SK-N-SH (cell line): ENCODE measurements at regions of chr2 and their contacts with region 1.

Region 1: DNA sequence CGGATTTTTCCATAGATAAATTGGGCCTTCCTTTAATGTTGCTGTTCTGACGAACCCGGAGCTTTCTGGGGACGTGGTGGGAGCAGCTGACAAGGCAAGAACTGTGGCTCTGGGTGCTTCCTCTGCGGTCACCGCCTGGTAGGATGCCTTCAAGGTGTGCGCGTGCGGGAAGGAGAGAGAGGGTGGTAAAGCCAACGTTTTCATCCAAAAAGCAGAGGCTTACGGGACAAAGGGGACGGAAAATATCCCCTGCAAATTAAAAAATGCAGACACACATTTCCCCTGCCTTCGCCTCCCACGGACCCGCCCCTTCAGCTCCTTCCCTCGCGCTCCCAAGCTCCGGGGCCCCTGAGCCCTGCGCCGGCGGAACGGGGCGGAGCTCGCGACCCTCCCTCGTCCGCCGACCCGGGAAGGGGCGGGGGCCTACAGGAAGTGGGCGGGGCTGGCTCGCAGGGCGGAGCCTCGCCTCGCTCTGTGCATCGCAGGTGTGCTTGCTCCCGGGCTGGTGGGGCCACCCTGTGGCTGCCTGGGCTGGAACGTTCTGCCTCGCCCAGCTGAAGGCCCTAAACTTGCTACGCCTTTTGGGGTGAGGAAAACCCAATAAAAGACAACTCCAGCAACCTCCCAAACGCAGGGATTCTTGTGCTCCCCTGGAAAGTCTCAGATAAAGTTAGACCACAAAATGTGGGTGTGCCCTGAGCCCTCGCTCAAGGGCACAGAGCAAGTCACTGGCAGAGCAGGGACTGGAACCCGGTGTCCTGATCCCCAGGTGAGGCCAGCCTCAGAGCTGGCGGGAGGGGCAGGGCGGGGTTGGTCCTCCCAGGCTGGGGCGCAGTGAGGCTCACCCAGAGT is 25.4 kb upstream of the SLC66A3 start:
- DNase-seq: peak; percentile 96
- H3K4me3 ChIP-seq: peak overlapping the region in 1 of 2 experiments; percentile 29; a peak in 2 of 4 replicates
- H3K27ac ChIP-seq: peak overlapping the region in 1 of 2 experiments; percentile 3; a peak in 1 of 4 replicates
- H3K4me1 ChIP-seq: peaks cover 0 to 20% of the 10 kb centered on the region in 2 experiments; a peak in 1 of 4 replicates
- H3K27me3 ChIP-seq: no peaks in the 10 kb centered on the region
- CTCF ChIP-seq: no peak
- EP300 ChIP-seq: no peak
- RAD21 ChIP-seq: peak; percentile 68

Region 2: DNA sequence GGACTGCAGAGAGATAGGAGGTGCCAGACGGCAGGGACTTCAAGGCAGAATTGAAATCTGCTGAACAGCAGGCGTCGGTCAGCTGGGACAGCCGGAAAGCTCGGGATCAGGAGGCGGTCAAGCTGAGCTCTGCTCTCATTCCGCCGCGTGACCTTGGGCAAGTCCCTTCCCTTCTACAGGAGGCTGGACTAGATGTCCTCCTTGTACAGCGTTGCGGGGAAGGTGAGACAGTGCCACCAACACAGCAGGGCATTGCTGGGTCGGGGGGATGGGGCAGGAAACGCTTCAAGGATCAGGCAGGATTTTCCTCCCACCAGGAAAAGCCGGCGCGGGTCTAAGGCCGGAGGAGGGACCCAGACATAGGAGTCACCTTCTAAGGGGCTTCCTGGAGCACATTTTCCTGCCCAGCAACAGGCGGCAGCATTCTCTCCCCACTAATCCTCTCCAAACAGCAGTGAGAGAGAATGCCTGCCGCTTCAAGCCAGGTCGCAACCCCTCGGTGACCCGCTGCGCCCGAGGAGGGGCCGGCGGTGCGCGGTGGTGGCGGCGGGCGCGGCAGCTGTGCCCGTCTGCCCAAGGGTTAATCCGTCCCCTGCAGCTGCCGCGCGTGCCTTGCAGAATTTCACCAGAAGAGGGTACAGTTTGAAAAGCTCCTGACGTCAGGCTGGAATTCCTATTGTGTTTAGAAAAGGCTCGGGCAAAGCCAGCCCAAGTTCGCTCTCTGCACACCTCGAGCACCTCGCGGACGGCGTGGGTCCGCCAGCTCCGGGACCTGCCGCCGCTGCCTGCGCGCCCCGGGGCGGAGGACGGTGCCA is 218.4 kb before region 1 on chr2 and contains the start of gene KCNF1:
- CTCF ChIA-PET with region 1: interaction called, 94 read pairs
- POLR2A ChIA-PET with region 1: no interaction called
- DNase-seq: peak; percentile 90
- H3K4me3 ChIP-seq: peak within 1 kb of the TSS; percentile 51 to 63
- H3K27ac ChIP-seq: no peak within 1 kb of the TSS
- H3K4me1 ChIP-seq: peaks cover 0 to 12% of the 10 kb centered on the region in 2 experiments; a peak in 1 of 4 replicates
- H3K27me3 ChIP-seq: peaks cover 14% of the 10 kb centered on the region; the same call in 1 of the 2 replicates
- CTCF ChIP-seq: peak; percentile 56
- EP300 ChIP-seq: no peak
- RAD21 ChIP-seq: peak; percentile 41
- polyA plus RNA-seq, gene KCNF1: 0.16 and 0.23 TPM in 2 replicates

Region 3: GRCh38 chr2:10948606-10949230 is 181.1 kb before region 1 on chr2:
- CTCF ChIA-PET with region 1: no interaction called
- POLR2A ChIA-PET with region 1: no interaction called
- DNase-seq: no peak
- H3K4me3 ChIP-seq: no peak overlapping the region
- H3K27ac ChIP-seq: no peak overlapping the region
- H3K4me1 ChIP-seq: peaks cover 4 to 16% of the 10 kb centered on the region in 2 experiments; a peak in 3 of 4 replicates
- H3K27me3 ChIP-seq: no peaks in the 10 kb centered on the region; the same call in 1 of the 2 replicates
- CTCF ChIP-seq: no peak
- EP300 ChIP-seq: no peak
- RAD21 ChIP-seq: no peak

Region 4: DNA sequence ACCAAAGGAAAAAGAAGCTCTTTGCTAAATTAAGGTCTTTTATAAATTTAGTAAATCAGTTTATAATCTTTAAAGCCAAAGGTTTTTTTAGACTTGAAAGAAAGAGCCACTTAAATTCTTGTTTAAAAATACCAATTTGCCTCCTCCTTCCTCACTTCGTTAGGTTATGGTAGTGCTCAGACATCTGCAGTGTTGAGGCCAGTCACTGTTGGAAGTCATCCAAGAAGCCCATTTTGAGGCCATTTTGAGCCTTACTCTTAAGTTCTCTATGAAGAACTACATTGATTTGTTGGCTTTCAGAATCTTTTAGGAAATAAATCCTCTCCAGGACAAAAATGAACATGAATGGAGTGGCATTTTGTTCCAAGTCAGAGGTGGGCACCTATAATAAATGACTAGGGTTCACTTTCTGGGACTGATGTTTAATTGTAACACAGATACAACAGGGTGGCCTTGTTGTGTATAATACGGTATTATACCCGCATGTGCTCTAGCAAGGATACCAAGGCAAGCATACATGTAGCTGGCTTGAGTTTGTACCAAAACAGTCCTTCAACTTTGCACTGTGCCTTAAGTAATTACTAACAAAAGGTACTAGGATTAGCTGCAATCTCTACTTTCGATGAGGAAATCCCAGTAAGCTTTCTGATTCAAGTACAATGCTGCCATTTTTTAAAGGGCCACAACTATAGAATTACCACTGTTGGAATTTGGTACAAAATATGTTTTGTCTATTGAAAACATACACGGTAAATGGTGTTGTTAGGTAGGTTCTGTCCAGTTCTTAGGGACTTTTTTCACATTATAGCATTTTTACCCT is 48.3 kb after region 1 on chr2:
- CTCF ChIA-PET with region 1: interaction called, 12 read pairs
- POLR2A ChIA-PET with region 1: no interaction called
- DNase-seq: peak; percentile 50
- H3K4me3 ChIP-seq: no peak overlapping the region
- H3K27ac ChIP-seq: peak overlapping the region; percentile 36 to 58; a peak in 3 of 4 replicates
- H3K4me1 ChIP-seq: peaks cover 5 to 12% of the 10 kb centered on the region in 2 experiments; a peak in 2 of 4 replicates
- H3K27me3 ChIP-seq: no peaks in the 10 kb centered on the region
- CTCF ChIP-seq: no peak
- EP300 ChIP-seq: no peak
- RAD21 ChIP-seq: no peak

Region 5: DNA sequence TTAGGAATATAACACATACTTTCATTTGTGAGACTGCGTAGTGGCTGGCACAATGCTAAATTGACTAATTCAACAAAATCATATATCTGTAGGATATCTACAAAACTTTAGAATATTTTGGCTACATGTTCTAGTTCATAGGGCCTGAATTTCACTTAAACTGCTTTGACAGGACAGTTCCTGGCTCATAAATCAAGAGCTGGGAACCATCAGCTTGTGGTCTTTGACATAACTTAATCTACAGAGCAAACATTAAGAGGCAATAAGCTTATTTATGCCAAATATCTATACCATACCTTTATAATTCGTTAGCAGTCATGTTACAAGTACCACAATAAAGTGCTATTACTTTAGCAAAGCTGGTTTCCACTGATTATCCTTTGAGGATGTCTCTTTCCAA is 131.2 kb after region 1 on chr2:
- CTCF ChIA-PET with region 1: interaction called, 10 read pairs
- POLR2A ChIA-PET with region 1: no interaction called
- DNase-seq: no peak
- H3K4me3 ChIP-seq: no peak overlapping the region
- H3K27ac ChIP-seq: peak overlapping the region; percentile 29 to 53; a peak in 3 of 4 replicates
- H3K4me1 ChIP-seq: peaks cover 0 to 3% of the 10 kb centered on the region in 2 experiments; a peak in 1 of 4 replicates
- H3K27me3 ChIP-seq: no peaks in the 10 kb centered on the region
- CTCF ChIP-seq: no peak
- EP300 ChIP-seq: no peak
- RAD21 ChIP-seq: no peak

Region 6: DNA sequence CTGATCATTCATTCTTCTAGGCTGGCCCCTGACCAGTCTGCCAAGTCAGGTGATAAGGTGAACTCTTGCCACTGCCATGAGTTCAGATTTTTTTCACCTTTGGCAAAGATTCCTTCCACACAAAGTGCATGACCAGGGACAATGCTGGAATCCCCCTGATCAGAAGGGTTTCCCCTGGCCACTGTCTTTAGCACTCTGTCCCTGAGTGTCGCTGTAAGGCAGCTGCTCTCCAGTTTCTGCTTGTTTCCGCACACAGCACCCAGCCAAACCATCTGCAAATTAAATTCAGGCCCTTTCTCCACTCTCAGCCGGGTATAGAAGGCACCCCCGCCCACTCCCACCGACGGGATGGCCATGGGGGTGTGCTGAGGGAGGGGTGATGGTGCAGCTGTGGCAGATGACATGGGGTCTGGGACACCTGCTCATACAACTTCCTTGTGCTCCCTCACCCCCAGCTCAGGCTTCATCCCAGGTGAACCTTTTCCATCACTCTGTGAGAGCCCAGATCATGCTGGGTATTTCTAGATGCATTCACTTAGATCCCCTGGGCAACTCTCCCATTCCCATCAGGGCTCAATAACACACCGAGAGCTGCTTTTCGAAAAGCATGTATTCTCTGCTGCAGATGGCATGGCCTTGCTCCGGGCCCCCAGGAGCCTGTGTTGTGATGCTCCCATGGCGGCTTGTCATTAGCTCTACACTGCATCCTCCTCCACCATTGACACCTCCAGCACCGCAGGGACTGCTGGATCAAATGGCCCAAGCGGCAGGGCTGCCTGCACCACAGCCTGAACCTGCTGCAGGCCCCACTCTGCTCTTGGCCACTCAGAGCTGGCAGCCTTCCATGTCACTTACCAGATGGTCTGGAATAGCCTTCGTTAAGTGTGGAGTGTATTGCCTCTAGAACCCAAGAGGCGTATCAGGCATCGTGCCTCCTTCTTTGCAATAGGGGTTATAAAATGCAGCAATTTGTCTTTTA is 266.9 kb after region 1 on chr2:
- CTCF ChIA-PET with region 1: interaction called, 294 read pairs
- POLR2A ChIA-PET with region 1: no interaction called
- DNase-seq: peak; percentile 71
- H3K4me3 ChIP-seq: no peak overlapping the region
- H3K27ac ChIP-seq: no peak overlapping the region
- H3K4me1 ChIP-seq: peaks cover 2 to 14% of the 10 kb centered on the region in 2 experiments; a peak in 2 of 4 replicates
- H3K27me3 ChIP-seq: no peaks in the 10 kb centered on the region
- CTCF ChIP-seq: no peak
- EP300 ChIP-seq: no peak
- RAD21 ChIP-seq: no peak

Region 7: DNA sequence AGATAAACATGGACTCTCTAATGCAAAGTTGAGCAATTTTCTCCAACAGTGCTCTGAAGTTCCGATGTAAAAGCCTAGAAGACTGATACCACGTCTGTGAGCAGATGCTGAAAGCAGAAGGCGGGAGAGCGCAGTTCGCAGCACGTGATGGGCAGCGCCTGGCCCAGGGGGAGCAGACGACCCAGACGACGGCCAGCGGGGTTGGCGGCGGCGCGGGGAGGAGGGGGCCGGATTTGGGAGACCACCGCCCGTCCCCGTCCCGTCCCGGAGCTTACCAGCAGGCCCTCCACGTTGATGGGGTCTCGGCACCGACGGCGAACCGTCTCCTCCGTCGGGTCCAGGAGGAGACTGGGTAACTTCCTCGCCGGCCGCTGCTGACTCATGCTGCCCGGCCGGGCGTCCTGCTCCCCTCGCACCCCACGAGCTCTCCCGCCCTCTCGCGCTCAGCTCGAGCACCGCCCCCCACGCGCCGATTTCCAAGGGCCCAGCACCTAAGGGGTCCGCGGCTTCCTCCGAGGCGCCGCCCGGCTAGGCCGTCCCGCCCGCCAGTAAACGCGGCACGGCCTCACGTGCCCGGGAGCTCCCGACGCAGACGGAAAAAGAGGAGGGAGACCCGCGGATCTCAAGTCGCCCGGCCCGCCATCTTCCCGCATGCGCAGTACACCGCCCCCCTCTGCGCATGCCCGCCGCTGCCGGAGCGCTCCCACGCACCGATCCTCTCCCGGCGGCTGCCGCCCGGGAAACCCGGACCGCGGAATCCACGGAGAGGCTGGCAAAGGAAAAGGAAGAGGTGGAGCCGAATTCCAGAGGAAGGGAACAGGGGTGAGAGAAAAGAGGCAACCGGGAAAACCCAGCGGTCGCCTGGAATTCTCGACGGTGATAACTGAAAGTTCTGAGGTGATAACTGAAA is 335.9 kb after region 1 on chr2 and contains the start of gene E2F6:
- CTCF ChIA-PET with region 1: interaction called, 66 read pairs
- POLR2A ChIA-PET with region 1: no interaction called
- DNase-seq: peak; percentile 98
- H3K4me3 ChIP-seq: peak within 1 kb of the TSS; percentile 64 to 72
- H3K27ac ChIP-seq: peak within 1 kb of the TSS; percentile 86 to 90
- H3K4me1 ChIP-seq: peaks cover 16 to 27% of the 10 kb centered on the region in 2 experiments
- H3K27me3 ChIP-seq: no peaks in the 10 kb centered on the region
- CTCF ChIP-seq: no peak
- EP300 ChIP-seq: peak; percentile 48 to 72
- RAD21 ChIP-seq: no peak
- polyA plus RNA-seq, gene E2F6: 15.3 and 19.7 TPM in 2 replicates